ENCODE measurements at regions of chr9 and their contacts with region 1.

Region 1: GRCh38 chr9:91131433-91131839 is 230.3 kb downstream of the AUH start:
- DNase-seq: peak; percentile 70
- H3K4me3 Mint-ChIP-seq: peak overlapping the region; percentile 63
- H3K27ac Mint-ChIP-seq: peak overlapping the region; percentile 96
- H3K4me1 Mint-ChIP-seq: peaks cover 42% of the 10 kb centered on the region
- H3K27me3 Mint-ChIP-seq: no peaks in the 10 kb centered on the region

Region 2: DNA sequence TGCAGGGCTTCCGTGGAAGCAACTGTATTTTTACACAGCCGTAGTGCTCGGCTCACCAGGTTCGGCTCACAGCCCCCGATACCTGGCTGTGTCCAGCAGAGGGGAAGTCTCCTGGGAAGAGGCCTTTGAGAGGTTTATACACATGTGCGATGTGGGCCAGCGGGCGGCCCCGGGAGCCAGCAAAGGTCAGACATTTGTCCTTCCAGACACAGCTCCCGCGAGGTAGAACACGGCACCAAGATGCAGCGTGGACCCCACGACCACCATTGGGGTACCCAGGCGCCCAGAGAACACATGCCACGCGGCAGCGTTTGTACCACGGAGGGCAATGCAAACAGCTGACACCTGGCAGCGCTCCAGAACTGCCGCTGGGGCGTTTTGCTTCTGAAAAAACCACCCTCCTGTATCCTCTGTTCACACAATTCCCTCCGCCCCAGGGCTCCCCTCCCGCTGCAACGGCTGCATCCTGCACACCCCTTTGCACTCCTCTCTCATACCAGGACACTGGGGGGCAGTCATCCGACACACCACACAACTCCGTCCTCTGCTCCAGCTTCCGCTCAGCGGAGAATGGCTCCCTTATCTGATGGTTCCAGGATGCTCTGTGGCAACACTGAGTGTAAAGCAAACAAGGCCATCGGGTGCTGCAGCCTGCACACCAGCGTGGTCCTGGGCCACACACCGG is 94.5 kb before region 1 on chr9:
- intact Hi-C with region 1: loop called (anchors 2 kb)
- DNase-seq: peak; percentile 69
- H3K4me3 Mint-ChIP-seq: peak overlapping the region; percentile 35
- H3K27ac Mint-ChIP-seq: peak overlapping the region; percentile 70
- H3K4me1 Mint-ChIP-seq: peaks cover 61% of the 10 kb centered on the region
- H3K27me3 Mint-ChIP-seq: peaks cover 3% of the 10 kb centered on the region

Region 3: GRCh38 chr9:91089405-91090129 is 41.9 kb before region 1 on chr9:
- intact Hi-C with region 1: loop called (anchors 1 kb)
- DNase-seq: no peak
- H3K4me3 Mint-ChIP-seq: no peak overlapping the region
- H3K27ac Mint-ChIP-seq: peak overlapping the region; percentile 71
- H3K4me1 Mint-ChIP-seq: peaks cover 54% of the 10 kb centered on the region
- H3K27me3 Mint-ChIP-seq: no peaks in the 10 kb centered on the region

Region 4: GRCh38 chr9:91164724-91165520 is 33.5 kb after region 1 on chr9:
- intact Hi-C with region 1: loop called (anchors 1 kb)
- DNase-seq: peak; percentile 74
- H3K4me3 Mint-ChIP-seq: peak overlapping the region; percentile 82
- H3K27ac Mint-ChIP-seq: peak overlapping the region; percentile 98
- H3K4me1 Mint-ChIP-seq: peaks cover 62% of the 10 kb centered on the region
- H3K27me3 Mint-ChIP-seq: no peaks in the 10 kb centered on the region

Region 5: GRCh38 chr9:91207729-91208418 is 76.4 kb after region 1 on chr9:
- intact Hi-C with region 1: loop called (anchors 1 kb)
- DNase-seq: no peak
- H3K4me3 Mint-ChIP-seq: peak overlapping the region; percentile 68
- H3K27ac Mint-ChIP-seq: peak overlapping the region; percentile 95
- H3K4me1 Mint-ChIP-seq: peaks cover 59% of the 10 kb centered on the region
- H3K27me3 Mint-ChIP-seq: no peaks in the 10 kb centered on the region

Measured in activated T-helper 1 cell treated with anti-CD3 and anti-CD28 coated beads, Interleukin-12 subunit alpha, Interleukin-12 subunit beta, Interleukin-2, Interleukin-4 antibody, amounts not matched to agents 30 ng/mL and 10 ng/mL and 1 ng/mL, durations not matched to agents 14 hours and 24 hours and 36 hours (primary cell).